ENCODE measurements at regions of chr17 and their contacts with region 1.

Region 1: DNA sequence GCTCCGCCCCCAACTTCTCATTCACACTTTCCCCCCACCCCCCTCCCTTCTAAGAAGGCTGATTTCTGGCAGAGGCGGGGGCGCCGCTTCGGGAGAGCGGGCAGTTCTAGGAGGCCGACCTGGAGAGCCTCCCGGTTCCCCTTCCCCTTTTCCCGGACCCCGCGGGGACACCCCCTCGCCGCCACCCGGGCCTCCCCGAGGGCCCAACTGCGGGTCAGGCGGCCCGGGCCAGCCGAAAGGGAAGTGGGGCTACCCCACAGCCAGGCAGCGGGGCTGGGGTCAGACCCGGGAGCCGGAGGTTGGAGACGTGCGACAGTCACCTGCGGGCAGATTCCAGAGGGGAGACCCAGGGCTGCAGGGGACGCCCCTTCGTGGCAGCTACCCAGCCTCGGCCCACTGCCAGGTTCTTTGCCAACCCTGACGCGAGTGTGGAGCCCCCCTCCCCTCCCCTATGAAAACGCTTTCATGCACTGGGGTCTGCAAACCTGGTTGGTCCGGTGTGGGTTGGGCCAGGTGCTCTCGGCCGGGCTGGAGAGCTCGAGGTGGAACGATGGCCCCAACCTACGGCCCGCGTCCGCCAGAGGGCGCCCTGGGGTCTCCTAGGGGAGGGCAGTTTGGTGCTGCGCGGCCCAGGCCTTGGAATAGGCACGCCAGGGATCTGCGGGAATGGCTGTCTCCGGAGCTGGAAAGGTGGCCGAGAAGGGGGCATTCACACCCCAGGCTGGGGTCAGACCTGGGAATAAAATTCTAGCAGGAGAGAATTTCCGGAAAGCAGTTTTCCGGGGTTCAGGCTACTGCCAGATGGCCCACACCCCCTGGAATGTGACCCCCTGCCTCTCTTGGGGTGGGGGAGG is 721 bp upstream of the SOCS3 start:
- DNase-seq: peak; percentile 92 to 99
- ATAC-seq: peak; percentile 54 to 81
- H3K4me3 ChIP-seq: peak overlapping the region; percentile 86
- H3K27ac ChIP-seq: peak overlapping the region; percentile 93 to 96
- H3K4me1 ChIP-seq: peaks cover 35% of the 10 kb centered on the region
- CTCF ChIP-seq: peak; percentile 96
- EP300 ChIP-seq: peak in 1 of 2 experiments; percentile 3; a peak in 1 of 5 replicates
- POLR2A ChIP-seq: no peak
- RAD21 ChIP-seq: peak; percentile 90 to 96

Region 2: DNA sequence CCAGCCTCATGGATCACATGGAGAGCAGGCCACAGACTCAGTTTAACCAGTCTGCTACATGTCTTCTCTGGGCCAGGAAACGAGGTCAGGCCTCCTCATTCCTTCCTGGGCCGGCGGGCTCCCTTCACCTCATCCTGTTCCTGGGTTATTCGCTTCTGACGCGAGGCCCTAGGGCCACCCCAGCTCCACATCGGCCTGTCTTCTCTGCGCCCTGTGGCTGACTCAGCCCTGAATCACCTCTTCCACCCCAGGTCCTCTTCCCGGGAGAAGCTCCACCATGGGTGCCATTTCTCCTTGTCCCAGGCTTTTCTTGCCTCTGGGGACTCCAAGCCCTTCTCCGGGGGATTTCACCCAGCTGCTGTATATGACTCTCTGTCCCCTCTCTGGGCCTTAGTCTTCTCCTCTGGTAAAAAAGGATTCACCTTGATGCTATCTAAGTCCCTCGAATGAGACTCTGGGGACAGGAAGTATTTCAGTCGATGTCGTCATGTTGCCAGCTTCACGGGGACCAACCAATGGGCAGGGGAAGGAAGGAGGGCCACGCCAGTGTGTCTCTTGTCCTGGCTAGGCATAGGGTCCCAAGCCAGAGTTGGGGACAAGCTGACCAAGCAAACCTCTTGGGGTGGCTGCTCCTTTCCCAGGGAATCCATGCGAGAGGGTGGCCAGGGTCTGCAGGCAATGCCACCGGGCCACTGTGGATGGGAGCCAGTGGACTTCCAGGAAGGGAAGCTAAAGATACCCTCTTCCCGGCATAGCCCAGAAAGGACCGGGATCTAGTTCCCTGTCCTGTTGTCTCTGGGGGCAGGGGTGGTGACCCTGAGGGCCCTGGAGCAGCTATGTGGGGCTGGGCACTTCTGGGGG is 59.4 kb before region 1 on chr17:
- CTCF ChIA-PET with region 1: interaction called, 14 read pairs
- POLR2A ChIA-PET with region 1: no interaction called
- DNase-seq: peak in 1 of 2 experiments; percentile 39
- ATAC-seq: peak; percentile 32 to 64; a peak in 3 of 6 replicates
- H3K4me3 ChIP-seq: no peak overlapping the region
- H3K27ac ChIP-seq: peak overlapping the region; percentile 13 to 38; a peak in 5 of 6 replicates
- H3K4me1 ChIP-seq: peaks cover 17% of the 10 kb centered on the region
- CTCF ChIP-seq: no peak
- EP300 ChIP-seq: no peak
- POLR2A ChIP-seq: no peak
- RAD21 ChIP-seq: no peak

Region 3: GRCh38 chr17:78324391-78325075 is 36.1 kb before region 1 on chr17:
- CTCF ChIA-PET with region 1: interaction called, 32 read pairs
- POLR2A ChIA-PET with region 1: interaction called, 5 read pairs
- DNase-seq: peak in 1 of 2 experiments; percentile 66
- ATAC-seq: peak; percentile 33 to 62; a peak in 5 of 6 replicates
- H3K4me3 ChIP-seq: no peak overlapping the region
- H3K27ac ChIP-seq: peak overlapping the region; percentile 47 to 79; a peak in 5 of 6 replicates
- H3K4me1 ChIP-seq: peaks cover 34% of the 10 kb centered on the region
- CTCF ChIP-seq: no peak
- EP300 ChIP-seq: no peak
- POLR2A ChIP-seq: no peak
- RAD21 ChIP-seq: no peak

Region 4: GRCh38 chr17:78378225-78379130 is 17.9 kb after region 1 on chr17 and contains the start of gene PGS1:
- CTCF ChIA-PET with region 1: interaction called, 134 read pairs
- POLR2A ChIA-PET with region 1: interaction called, 10 read pairs
- DNase-seq: peak; percentile 76 to 81
- ATAC-seq: peak; percentile 78 to 85
- H3K4me3 ChIP-seq: peak within 1 kb of the TSS; percentile 91
- H3K27ac ChIP-seq: peak within 1 kb of the TSS; percentile 88 to 90
- H3K4me1 ChIP-seq: peaks cover 52% of the 10 kb centered on the region
- CTCF ChIP-seq: no peak
- EP300 ChIP-seq: no peak
- POLR2A ChIP-seq: peak; percentile 91
- RAD21 ChIP-seq: no peak; a peak in 1 of 5 replicates
- polyA plus RNA-seq, gene PGS1: 29.5 and 29.6 TPM in 2 replicates

Region 5: GRCh38 chr17:78390241-78391050 is 29.8 kb after region 1 on chr17:
- CTCF ChIA-PET with region 1: interaction called, 47 read pairs
- POLR2A ChIA-PET with region 1: interaction called, 3 read pairs
- DNase-seq: peak; percentile 59 to 75
- ATAC-seq: peak; percentile 80
- H3K4me3 ChIP-seq: no peak overlapping the region
- H3K27ac ChIP-seq: peak overlapping the region; percentile 18 to 82; a peak in 4 of 6 replicates
- H3K4me1 ChIP-seq: peaks cover 36% of the 10 kb centered on the region
- CTCF ChIP-seq: no peak
- EP300 ChIP-seq: no peak; a peak in 1 of 5 replicates
- POLR2A ChIP-seq: no peak
- RAD21 ChIP-seq: no peak

Region 6: DNA sequence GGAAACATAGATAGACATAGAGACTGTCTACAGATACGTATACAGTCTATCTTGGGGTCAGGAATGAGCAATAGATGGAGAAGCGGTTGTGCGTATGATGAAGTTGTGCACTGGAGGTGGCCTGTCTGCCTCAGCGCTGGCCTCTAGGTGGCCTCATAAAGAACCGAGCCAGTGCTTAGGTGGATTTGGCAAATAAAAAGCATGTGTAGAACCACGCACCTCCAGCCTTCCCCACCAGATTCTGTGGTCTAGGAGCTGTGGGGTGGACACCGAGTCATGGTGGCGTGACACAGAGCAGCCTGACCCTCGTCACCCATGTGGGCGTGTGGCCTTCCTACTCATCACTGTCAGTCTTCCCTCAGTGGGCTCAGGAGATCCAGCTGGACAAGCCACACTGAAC is 51.8 kb after region 1 on chr17:
- CTCF ChIA-PET with region 1: interaction called, 388 read pairs
- POLR2A ChIA-PET with region 1: no interaction called
- DNase-seq: peak; percentile 51 to 58
- ATAC-seq: peak; percentile 51 to 69; a peak in 4 of 6 replicates
- H3K4me3 ChIP-seq: no peak overlapping the region
- H3K27ac ChIP-seq: no peak overlapping the region
- H3K4me1 ChIP-seq: peaks cover 25% of the 10 kb centered on the region
- CTCF ChIP-seq: peak; percentile 51
- EP300 ChIP-seq: no peak
- POLR2A ChIP-seq: no peak
- RAD21 ChIP-seq: peak in 1 of 2 experiments; percentile 26; a peak in 1 of 5 replicates

Region 7: DNA sequence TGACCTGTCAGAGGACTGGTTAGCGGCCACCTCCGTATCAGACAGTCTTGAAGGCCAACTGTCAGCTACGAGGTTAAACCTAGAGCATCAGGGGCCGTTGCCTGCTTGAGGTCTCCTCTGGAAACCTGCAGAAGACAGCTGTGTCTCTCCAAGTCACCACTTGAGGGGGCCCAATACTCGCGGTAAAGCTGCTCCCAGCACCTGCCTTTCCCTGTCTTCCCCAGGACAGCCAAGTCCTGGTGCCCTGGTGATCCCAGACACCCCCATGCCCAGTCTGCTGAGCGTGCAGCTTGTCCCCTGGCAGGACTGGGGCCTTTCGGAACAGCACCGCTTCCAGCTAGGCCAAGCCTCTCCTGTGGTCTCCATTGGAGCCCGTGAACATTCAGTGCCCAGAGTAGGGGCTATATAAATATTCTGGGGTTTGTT is 136.5 kb after region 1 on chr17:
- CTCF ChIA-PET with region 1: interaction called, 12 read pairs
- POLR2A ChIA-PET with region 1: no interaction called
- DNase-seq: peak; percentile 94 to 97
- ATAC-seq: peak; percentile 87 to 95
- H3K4me3 ChIP-seq: no peak overlapping the region
- H3K27ac ChIP-seq: peak overlapping the region; percentile 86 to 91
- H3K4me1 ChIP-seq: peaks cover 32% of the 10 kb centered on the region
- CTCF ChIP-seq: peak; percentile 99
- EP300 ChIP-seq: peak in 1 of 2 experiments; percentile 17; a peak in 1 of 5 replicates
- POLR2A ChIP-seq: no peak
- RAD21 ChIP-seq: peak; percentile 100

Region 8: GRCh38 chr17:78532922-78533640 is 172.5 kb after region 1 on chr17:
- CTCF ChIA-PET with region 1: no interaction called
- POLR2A ChIA-PET with region 1: no interaction called
- DNase-seq: peak; percentile 88 to 90
- ATAC-seq: peak; percentile 61 to 74; a peak in 5 of 6 replicates
- H3K4me3 ChIP-seq: no peak overlapping the region
- H3K27ac ChIP-seq: peak overlapping the region; percentile 54 to 81; a peak in 5 of 6 replicates
- H3K4me1 ChIP-seq: peaks cover 49% of the 10 kb centered on the region
- CTCF ChIP-seq: no peak
- EP300 ChIP-seq: peak in 1 of 2 experiments; percentile 33; a peak in 1 of 5 replicates
- POLR2A ChIP-seq: no peak
- RAD21 ChIP-seq: no peak